Prostate gland (tissue), 2 donors: ENCODE measurements at regions of chr15 and their contacts with region 1.

Region 1: DNA sequence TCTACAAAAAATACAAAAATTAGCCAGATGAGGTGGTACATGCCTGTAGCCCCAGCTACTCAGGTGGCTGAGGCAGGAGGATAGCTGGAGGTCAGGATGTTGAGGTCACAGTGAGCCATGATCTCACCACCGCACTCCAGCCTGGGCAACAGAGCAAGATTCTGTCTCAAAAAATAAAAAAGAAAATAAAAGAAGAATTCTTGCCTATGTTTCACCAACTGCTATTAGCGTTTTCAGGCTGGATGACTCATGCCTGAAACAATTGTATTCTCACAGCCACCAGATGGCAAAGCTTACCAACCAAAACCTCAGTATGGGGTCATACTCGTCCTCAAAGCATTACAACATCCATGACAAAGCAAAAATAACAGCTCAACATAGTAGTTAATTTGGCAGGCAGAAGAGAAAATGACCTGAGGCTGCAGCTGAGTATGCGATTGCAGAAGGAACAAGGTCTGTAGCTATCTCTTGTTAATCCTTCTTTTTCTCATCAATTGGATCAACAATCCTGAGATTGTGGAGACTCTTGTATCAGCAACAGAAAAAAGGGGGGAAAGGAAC is 52.2 kb downstream of the TP53BP1 start:
- DNase-seq: peak; percentile 7
- H3K4me3 ChIP-seq: no peak overlapping the region
- H3K27ac ChIP-seq: no peak overlapping the region
- H3K4me1 ChIP-seq: no peaks in the 10 kb centered on the region
- H3K27me3 ChIP-seq: no peaks in the 10 kb centered on the region
- CTCF ChIP-seq: peak in 2 of 4 experiments; percentile 65 to 66
- POLR2A ChIP-seq: no peak

Region 2: GRCh38 chr15:43249699-43250203 is 191.1 kb before region 1 on chr15:
- intact Hi-C with region 1: no loop called
- DNase-seq: no peak
- H3K4me3 ChIP-seq: no peak overlapping the region
- H3K27ac ChIP-seq: no peak overlapping the region
- H3K4me1 ChIP-seq: no peaks in the 10 kb centered on the region
- H3K27me3 ChIP-seq: no peaks in the 10 kb centered on the region
- CTCF ChIP-seq: no peak
- POLR2A ChIP-seq: no peak

Region 3: GRCh38 chr15:43510200-43511011 is 69.6 kb after region 1 on chr15:
- intact Hi-C with region 1: loop called (anchors 5 kb)
- DNase-seq: peak; percentile 97
- H3K4me3 ChIP-seq: peak overlapping the region; percentile 51 to 52
- H3K27ac ChIP-seq: peak overlapping the region; percentile 70 to 83
- H3K4me1 ChIP-seq: no peaks in the 10 kb centered on the region
- H3K27me3 ChIP-seq: no peaks in the 10 kb centered on the region
- CTCF ChIP-seq: peak in 2 of 4 experiments; percentile 43 to 44
- POLR2A ChIP-seq: peak; percentile 64

Region 4: GRCh38 chr15:43769584-43770228 is 328.9 kb after region 1 on chr15:
- intact Hi-C with region 1: loop called (anchors 5 kb)
- DNase-seq: no peak
- H3K4me3 ChIP-seq: no peak overlapping the region
- H3K27ac ChIP-seq: no peak overlapping the region
- H3K4me1 ChIP-seq: no peaks in the 10 kb centered on the region
- H3K27me3 ChIP-seq: no peaks in the 10 kb centered on the region
- CTCF ChIP-seq: peak; percentile 27 to 65 (median 40)
- POLR2A ChIP-seq: no peak